CD4-positive, alpha-beta T cell (primary cell): ENCODE measurements at regions of chr9 and their contacts with region 1.

Region 1: DNA sequence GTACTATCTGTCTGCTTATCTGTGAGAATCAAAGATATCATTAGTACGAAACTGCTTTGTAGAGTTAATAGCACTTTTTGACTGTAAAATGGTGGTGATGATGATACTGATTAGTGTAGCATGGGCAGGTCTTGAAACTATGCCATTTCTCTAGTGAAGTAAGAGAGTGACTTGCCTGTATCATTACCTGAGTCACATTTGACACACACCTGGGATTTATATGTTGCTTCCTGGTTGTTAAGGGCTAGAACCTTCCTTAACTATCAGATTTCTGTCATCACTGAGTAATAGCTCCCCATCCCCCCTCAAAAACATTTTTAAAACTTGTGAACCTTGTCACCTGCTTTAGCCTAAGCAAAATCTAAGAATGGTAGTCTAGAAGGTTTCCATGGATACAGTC is 135.6 kb upstream of the RORB start:
- DNase-seq: no peak
- ATAC-seq: no peak
- H3K4me3 ChIP-seq: no peak overlapping the region
- H3K4me3 Mint-ChIP-seq: no peak overlapping the region
- H3K27ac ChIP-seq: no peak overlapping the region
- H3K27ac Mint-ChIP-seq: no peak overlapping the region
- H3K4me1 ChIP-seq: no peaks in the 10 kb centered on the region
- H3K4me1 Mint-ChIP-seq: no peaks in the 10 kb centered on the region
- H3K27me3 ChIP-seq: no peaks in the 10 kb centered on the region
- H3K27me3 Mint-ChIP-seq: no peaks in the 10 kb centered on the region
- CTCF ChIP-seq: no peak

Region 2: GRCh38 chr9:74404620-74405019 is 43.1 kb after region 1 on chr9:
- CTCF ChIA-PET with region 1: no interaction called
- POLR2A ChIA-PET with region 1: no interaction called
- intact Hi-C with region 1: loop called in 1 of 2 experiments (anchors 5 kb)
- DNase-seq: no peak
- ATAC-seq: no peak
- H3K4me3 ChIP-seq: no peak overlapping the region
- H3K4me3 Mint-ChIP-seq: no peak overlapping the region
- H3K27ac ChIP-seq: no peak overlapping the region
- H3K27ac Mint-ChIP-seq: no peak overlapping the region
- H3K4me1 ChIP-seq: no peaks in the 10 kb centered on the region
- H3K4me1 Mint-ChIP-seq: no peaks in the 10 kb centered on the region
- H3K27me3 ChIP-seq: no peaks in the 10 kb centered on the region
- H3K27me3 Mint-ChIP-seq: no peaks in the 10 kb centered on the region
- CTCF ChIP-seq: no peak